Dendritic cell treated with granulocyte-macrophage colony-stimulating factor and Interleukin-4, amounts not matched to agents 40 ng/mL and 50 ng/mL, for 4 days (primary cell): ENCODE measurements at regions of chr9 and their contacts with region 1.

Region 1: DNA sequence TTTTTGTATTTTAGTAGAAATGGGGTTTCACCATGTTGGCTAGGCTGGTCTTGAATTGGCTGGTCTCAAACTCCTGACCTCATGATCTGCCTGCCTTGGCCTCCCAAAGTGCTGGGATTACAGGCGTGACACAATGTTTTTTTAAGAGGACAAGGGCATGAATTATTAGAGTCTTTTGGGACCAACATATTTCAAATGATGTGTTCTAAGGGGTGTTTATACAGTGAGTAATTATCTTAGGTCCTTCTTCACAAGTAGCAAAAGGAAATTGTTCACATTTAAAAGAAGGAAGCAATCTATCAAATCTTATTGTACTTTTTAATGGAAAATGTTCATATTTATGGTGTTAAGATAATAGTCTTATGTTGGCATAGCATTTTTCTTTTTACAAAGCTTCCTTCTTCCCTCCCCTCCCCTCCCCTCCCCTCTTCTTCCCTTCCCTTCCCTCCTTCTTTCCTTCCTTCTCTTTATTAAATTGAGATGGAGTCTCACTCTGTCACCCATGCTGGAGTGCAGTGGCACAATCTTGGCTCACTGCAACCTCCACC is 6.7 kb downstream of the GNG10 start:
- H3K4me3 Mint-ChIP-seq: no peak overlapping the region
- H3K27ac Mint-ChIP-seq: no peak overlapping the region
- H3K4me1 Mint-ChIP-seq: peaks cover 12% of the 10 kb centered on the region
- H3K27me3 Mint-ChIP-seq: no peaks in the 10 kb centered on the region

Region 2: DNA sequence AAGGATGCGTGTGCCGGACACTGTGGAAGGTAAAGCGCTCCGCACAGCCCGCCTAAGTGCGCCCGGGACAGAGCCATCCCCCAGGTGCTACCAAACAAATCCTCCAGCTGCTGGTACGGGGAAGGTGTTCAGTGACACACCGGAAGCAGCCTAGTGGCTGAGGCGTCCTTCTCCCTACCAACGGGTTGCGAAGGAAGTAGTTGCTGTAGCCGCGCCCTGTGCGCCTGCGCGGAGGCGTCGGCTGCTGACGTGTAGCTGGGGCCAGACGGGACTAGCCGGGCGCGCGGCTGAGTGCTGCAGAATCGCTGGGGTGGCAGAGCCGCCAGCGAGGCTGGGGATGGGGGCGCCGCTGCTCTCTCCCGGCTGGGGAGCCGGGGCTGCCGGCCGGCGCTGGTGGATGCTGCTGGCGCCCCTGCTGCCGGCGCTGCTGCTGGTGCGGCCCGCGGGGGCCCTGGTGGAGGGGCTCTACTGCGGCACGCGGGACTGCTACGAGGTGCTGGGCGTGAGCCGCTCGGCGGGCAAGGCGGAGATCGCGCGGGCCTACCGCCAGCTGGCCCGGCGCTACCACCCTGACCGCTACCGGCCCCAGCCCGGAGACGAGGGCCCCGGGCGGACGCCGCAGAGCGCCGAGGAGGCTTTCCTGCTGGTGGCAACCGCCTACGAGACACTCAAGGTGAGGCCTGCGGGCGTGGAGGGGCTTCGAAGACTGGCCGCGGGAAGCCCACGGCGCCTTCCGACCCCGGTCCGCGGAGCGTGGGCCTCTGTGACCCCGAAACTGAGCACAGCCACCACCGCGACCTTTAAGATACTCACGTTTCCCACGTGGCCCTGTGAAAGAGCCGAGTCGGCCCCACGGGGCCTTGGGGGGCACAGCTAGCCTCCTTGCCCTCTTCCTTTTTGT is 36.8 kb before region 1 on chr9 and contains the start of gene DNAJC25:
- intact Hi-C with region 1: loop called (anchors 5 kb)
- H3K4me3 Mint-ChIP-seq: peak within 1 kb of the TSS; percentile 96
- H3K27ac Mint-ChIP-seq: peak within 1 kb of the TSS; percentile 91
- H3K4me1 Mint-ChIP-seq: peaks cover 39% of the 10 kb centered on the region
- H3K27me3 Mint-ChIP-seq: no peaks in the 10 kb centered on the region